Activated B cell treated with CpG ODN at 0.5 μM for 24 hours (primary cell): ENCODE measurements at regions of chr19 and their contacts with region 1.

Region 1: GRCh38 chr19:13880059-13881043 is 3.4 kb downstream of the NANOS3 start:
- DNase-seq: peak; percentile 97
- ATAC-seq: peak; percentile 99
- H3K4me3 Mint-ChIP-seq: peak overlapping the region; percentile 19
- H3K27ac Mint-ChIP-seq: peak overlapping the region; percentile 30
- H3K4me1 Mint-ChIP-seq: peaks cover 28% of the 10 kb centered on the region
- H3K27me3 Mint-ChIP-seq: peaks cover 3% of the 10 kb centered on the region
- CTCF ChIP-seq: peak; percentile 98

Region 2: DNA sequence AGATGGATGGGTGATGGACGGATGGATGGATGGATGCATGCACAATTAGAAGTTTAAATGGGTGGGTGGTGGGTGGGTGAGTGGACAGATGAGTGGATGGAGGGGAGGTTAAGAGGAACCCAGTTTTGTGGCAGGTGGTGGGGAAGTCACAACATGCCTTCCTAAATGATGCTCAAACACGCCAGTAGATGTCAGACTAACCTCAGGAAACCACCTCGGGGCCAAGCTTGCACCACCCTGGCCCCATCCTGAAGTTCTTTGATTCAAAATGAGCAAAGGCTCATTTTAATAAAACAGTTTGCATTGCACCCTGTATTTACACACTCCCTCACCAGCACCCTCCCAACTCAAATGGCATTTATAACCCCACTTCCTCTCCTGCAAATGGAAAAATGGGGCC is 282.7 kb before region 1 on chr19:
- CTCF ChIA-PET with region 1: no interaction called
- POLR2A ChIA-PET with region 1: no interaction called
- intact Hi-C with region 1: loop called (anchors 1 kb)
- DNase-seq: no peak
- ATAC-seq: peak; percentile 95
- H3K4me3 Mint-ChIP-seq: no peak overlapping the region
- H3K27ac Mint-ChIP-seq: no peak overlapping the region
- H3K4me1 Mint-ChIP-seq: peaks cover 5% of the 10 kb centered on the region
- H3K27me3 Mint-ChIP-seq: peaks cover 11% of the 10 kb centered on the region
- CTCF ChIP-seq: no peak

Region 3: GRCh38 chr19:14031719-14032480 is 151.5 kb after region 1 on chr19 and contains the start of gene IL27RA:
- CTCF ChIA-PET with region 1: interaction called, 11 read pairs
- POLR2A ChIA-PET with region 1: interaction called, 4 read pairs
- intact Hi-C with region 1: loop called (anchors 1 kb)
- DNase-seq: peak; percentile 70
- ATAC-seq: peak; percentile 74
- H3K4me3 Mint-ChIP-seq: peak within 1 kb of the TSS; percentile 91
- H3K27ac Mint-ChIP-seq: peak within 1 kb of the TSS; percentile 89
- H3K4me1 Mint-ChIP-seq: peaks cover 34% of the 10 kb centered on the region
- H3K27me3 Mint-ChIP-seq: no peaks in the 10 kb centered on the region
- CTCF ChIP-seq: no peak
- total RNA-seq, gene IL27RA: 34.5 and 34.6 TPM in 2 replicates

Region 4: GRCh38 chr19:14073261-14073924 is 193.0 kb after region 1 on chr19:
- CTCF ChIA-PET with region 1: interaction called, 42 read pairs
- POLR2A ChIA-PET with region 1: interaction called, 5 read pairs
- intact Hi-C with region 1: loop called (anchors 1 kb)
- DNase-seq: peak; percentile 88
- ATAC-seq: peak; percentile 66
- H3K4me3 Mint-ChIP-seq: peak overlapping the region; percentile 86
- H3K27ac Mint-ChIP-seq: no peak overlapping the region
- H3K4me1 Mint-ChIP-seq: peaks cover 19% of the 10 kb centered on the region
- H3K27me3 Mint-ChIP-seq: no peaks in the 10 kb centered on the region
- CTCF ChIP-seq: no peak

Region 5: GRCh38 chr19:14347999-14348889 is 467.9 kb after region 1 on chr19:
- CTCF ChIA-PET with region 1: interaction called, 7 read pairs
- POLR2A ChIA-PET with region 1: no interaction called
- intact Hi-C with region 1: loop called (anchors 1 kb)
- DNase-seq: peak; percentile 66
- ATAC-seq: peak; percentile 80
- H3K4me3 Mint-ChIP-seq: peak overlapping the region; percentile 57
- H3K27ac Mint-ChIP-seq: peak overlapping the region; percentile 24
- H3K4me1 Mint-ChIP-seq: peaks cover 27% of the 10 kb centered on the region
- H3K27me3 Mint-ChIP-seq: no peaks in the 10 kb centered on the region
- CTCF ChIP-seq: peak; percentile 83

Region 6: GRCh38 chr19:14482112-14482941 is 602.0 kb after region 1 on chr19:
- CTCF ChIA-PET with region 1: no interaction called
- POLR2A ChIA-PET with region 1: no interaction called
- intact Hi-C with region 1: loop called (anchors 1 kb)
- DNase-seq: no peak
- ATAC-seq: no peak
- H3K4me3 Mint-ChIP-seq: no peak overlapping the region
- H3K27ac Mint-ChIP-seq: no peak overlapping the region
- H3K4me1 Mint-ChIP-seq: peaks cover 2% of the 10 kb centered on the region
- H3K27me3 Mint-ChIP-seq: no peaks in the 10 kb centered on the region
- CTCF ChIP-seq: no peak